Heart left ventricle (tissue), 16 donors: ENCODE measurements at regions of chr5 and their contacts with region 1.

Region 1: GRCh38 chr5:177497292-177498033 is at the start of gene PDLIM7:
- DNase-seq: peak; percentile 95 to 98 (median 97)
- ATAC-seq: peak; percentile 80 to 87 (median 84)
- H3K4me3 ChIP-seq: peak within 1 kb of the TSS; percentile 68 to 96 (median 78)
- H3K27ac ChIP-seq: peak within 1 kb of the TSS; percentile 73 to 98 (median 95)
- H3K4me1 ChIP-seq: peaks cover 8 to 74% (median 59%) of the 10 kb centered on the region in 12 donors
- H3K27me3 ChIP-seq: no peaks in the 10 kb centered on the region
- CTCF ChIP-seq: peak in 5 of 12 donors; percentile 14 to 39 (median 17)
- POLR2A ChIP-seq: peak; percentile 77 to 98
- total RNA-seq, gene PDLIM7: 36.3 to 124 (median 49.4) TPM

Region 2: GRCh38 chr5:177317959-177318377 is 179.5 kb before region 1 on chr5:
- intact Hi-C with region 1: loop called in 3 of 10 experiments (anchors 5 to 10 kb)
- DNase-seq: peak; percentile 65 to 77 (median 75)
- ATAC-seq: peak in 3 of 4 donors; percentile 47 to 55 (median 49)
- H3K4me3 ChIP-seq: no peak overlapping the region
- H3K27ac ChIP-seq: no peak overlapping the region
- H3K4me1 ChIP-seq: peaks cover 0 to 18% (median under 1%) of the 10 kb centered on the region in 12 donors
- H3K27me3 ChIP-seq: no peaks in the 10 kb centered on the region
- CTCF ChIP-seq: peak; percentile 67 to 90 (median 82)
- POLR2A ChIP-seq: no peak

Region 3: GRCh38 chr5:177403792-177404640 is 93.4 kb before region 1 on chr5:
- intact Hi-C with region 1: loop called in 3 of 10 experiments (anchors 1 to 5 kb)
- DNase-seq: peak; percentile 85 to 93 (median 87)
- ATAC-seq: peak; percentile 85 to 97 (median 94)
- H3K4me3 ChIP-seq: peak overlapping the region; percentile 32 to 64 (median 56)
- H3K27ac ChIP-seq: peak overlapping the region in 2 of 12 donors; percentile 25 to 35
- H3K4me1 ChIP-seq: peaks cover 8 to 51% (median 32%) of the 10 kb centered on the region in 12 donors
- H3K27me3 ChIP-seq: peaks cover 39 to 63% (median 50%) of the 10 kb centered on the region in 9 donors
- CTCF ChIP-seq: peak; percentile 63 to 85 (median 68)
- POLR2A ChIP-seq: no peak

Region 4: DNA sequence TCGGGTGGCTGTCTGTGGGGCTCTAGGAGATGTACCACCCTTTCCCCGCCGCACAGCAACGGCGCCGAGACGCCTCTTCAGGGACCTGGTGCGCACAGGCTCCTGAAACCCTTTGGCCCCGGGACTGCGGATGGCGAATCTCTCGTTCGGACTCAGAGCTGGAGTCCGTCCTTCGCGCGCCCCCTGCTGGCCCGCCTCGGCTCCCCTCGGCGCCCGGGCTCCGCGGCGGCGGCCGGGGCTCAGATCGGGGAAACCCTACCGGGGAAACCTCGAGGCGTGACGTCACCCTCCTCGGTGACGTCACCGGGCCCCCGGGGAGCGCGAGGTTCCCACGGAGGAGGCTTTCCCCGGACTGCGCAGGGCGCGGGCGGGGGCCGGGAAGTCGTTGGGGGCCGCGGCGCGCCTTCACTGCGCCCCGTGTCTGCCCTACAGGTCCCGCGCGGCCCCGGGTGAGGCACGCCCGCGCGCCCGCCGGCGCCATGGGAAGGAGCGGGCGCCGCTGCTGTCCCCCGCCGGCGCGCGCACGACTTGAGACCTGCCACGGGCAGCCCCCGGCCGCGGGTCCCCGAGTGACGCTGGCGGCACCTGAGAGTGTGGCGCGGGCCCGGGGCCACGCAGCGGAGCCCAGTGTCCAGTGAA is 42.9 kb before region 1 on chr5:
- intact Hi-C with region 1: loop called in 9 of 10 experiments (anchors 1 to 5 kb)
- DNase-seq: peak; percentile 91 to 95 (median 92)
- ATAC-seq: peak; percentile 37 to 74 (median 70)
- H3K4me3 ChIP-seq: peak overlapping the region; percentile 48 to 81 (median 64)
- H3K27ac ChIP-seq: peak overlapping the region in 11 of 12 donors; percentile 60 to 83 (median 69)
- H3K4me1 ChIP-seq: peaks cover 0 to 57% (median 23%) of the 10 kb centered on the region in 12 donors
- H3K27me3 ChIP-seq: peaks cover 0 to 23% (median 3%) of the 10 kb centered on the region in 9 donors
- CTCF ChIP-seq: peak; percentile 85 to 96 (median 92)
- POLR2A ChIP-seq: peak in 1 of 2 donors; percentile 31

Region 5: GRCh38 chr5:177478711-177479646 is 18.5 kb before region 1 on chr5:
- intact Hi-C with region 1: loop called in 2 of 10 experiments (anchors 2 kb)
- DNase-seq: peak; percentile 87 to 94 (median 89)
- ATAC-seq: peak; percentile 86 to 92 (median 90)
- H3K4me3 ChIP-seq: peak overlapping the region in 1 of 12 donors; percentile 29
- H3K27ac ChIP-seq: peak overlapping the region in 11 of 12 donors; percentile 3 to 89 (median 54)
- H3K4me1 ChIP-seq: peaks cover 0 to 49% (median 26%) of the 10 kb centered on the region in 12 donors
- H3K27me3 ChIP-seq: peaks cover 0 to 9% (median 0%) of the 10 kb centered on the region in 9 donors
- CTCF ChIP-seq: no peak
- POLR2A ChIP-seq: no peak

Region 6: DNA sequence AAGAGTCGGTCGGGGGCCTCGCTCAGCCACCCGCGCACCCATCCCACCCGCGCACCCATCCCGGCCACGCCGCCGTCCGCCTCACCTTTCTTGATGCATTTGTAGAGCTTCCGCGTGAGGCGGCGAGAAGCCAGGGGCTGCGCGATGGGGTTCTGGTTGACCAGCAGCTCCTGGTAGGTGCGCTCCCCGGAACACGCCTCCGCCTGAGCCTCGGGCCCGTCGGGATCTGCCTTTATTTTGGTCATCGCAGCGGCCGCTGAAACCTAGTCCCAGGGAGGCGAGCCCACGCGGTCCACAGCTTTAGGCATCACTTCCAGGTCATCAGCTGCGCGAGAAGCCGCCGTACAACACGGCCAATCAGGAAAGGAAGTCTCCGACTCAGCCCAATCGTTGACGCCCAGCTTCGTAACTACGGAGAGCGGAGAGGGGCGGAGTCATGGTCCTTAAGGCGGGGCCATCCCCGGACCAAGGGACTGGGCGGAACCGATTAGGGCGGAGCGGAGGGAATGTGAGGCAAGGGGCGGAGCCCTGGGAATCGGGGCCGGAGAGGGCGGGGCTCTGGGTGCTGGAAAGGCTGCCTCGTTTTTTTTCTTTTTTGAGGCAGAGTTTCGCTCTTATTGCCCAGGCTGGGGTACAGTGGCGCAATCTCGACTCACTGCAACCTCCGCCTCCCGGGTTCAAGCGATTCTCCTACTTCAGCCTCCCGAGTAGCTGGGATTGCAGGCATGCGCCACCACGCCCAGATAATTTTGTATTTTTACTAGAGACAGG is 656.3 kb after region 1 on chr5 and contains the start of gene NHP2:
- intact Hi-C with region 1: no loop called
- DNase-seq: peak; percentile 98 to 99 (median 99)
- ATAC-seq: peak; percentile 99 to 100 (median 99)
- H3K4me3 ChIP-seq: peak within 1 kb of the TSS; percentile 57 to 97 (median 84)
- H3K27ac ChIP-seq: peak within 1 kb of the TSS in 11 of 12 donors; percentile 16 to 83 (median 68)
- H3K4me1 ChIP-seq: peaks cover 6 to 28% (median 17%) of the 10 kb centered on the region in 12 donors
- H3K27me3 ChIP-seq: no peaks in the 10 kb centered on the region
- CTCF ChIP-seq: no peak
- POLR2A ChIP-seq: peak in 1 of 2 donors; percentile 59
- total RNA-seq, gene NHP2: 60.9 to 196 (median 75.2) TPM